Gastrocnemius medialis (tissue), 4 donors: ENCODE measurements at regions of chr1 and their contacts with region 1.

Region 1: DNA sequence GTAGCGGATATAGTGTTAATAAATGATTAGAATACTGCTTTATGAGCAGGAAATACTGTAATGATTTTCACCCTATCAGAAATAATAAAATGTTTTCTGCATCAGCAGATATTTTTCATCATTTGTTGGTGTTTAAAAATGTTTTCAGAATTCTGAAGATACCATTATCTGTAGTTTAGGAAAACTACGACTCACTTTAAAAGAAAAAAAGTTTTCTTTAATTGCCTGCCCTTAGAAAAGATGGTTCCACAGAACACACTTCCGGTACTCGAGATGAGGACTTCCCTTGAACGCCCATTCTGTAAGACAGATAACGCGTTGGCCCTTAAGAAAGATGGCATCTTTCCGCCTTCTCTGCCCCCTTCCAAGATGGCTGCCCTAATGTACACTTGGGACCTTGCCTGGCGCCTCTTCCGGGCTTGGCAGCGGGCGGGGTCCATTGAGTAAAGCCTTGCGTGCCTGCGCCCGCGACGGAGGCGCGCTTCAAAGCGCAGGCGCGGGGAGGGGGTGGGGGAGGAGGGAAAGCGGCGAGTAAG is at the start of gene SZRD1:
- DNase-seq: peak; percentile 94 to 98
- ATAC-seq: peak; percentile 92 to 93
- H3K4me3 ChIP-seq: peak within 1 kb of the TSS; percentile 75 to 84 (median 80)
- H3K27ac ChIP-seq: peak within 1 kb of the TSS; percentile 95 to 96 (median 96)
- H3K4me1 ChIP-seq: peaks cover 24 to 35% of the 10 kb centered on the region in 2 donors
- H3K27me3 ChIP-seq: no peaks in the 10 kb centered on the region
- CTCF ChIP-seq: no peak
- POLR2A ChIP-seq: no peak
- total RNA-seq, gene SZRD1: 44.1 to 102 (median 83.1) TPM

Region 2: GRCh38 chr1:16078925-16079656 is 287.7 kb before region 1 on chr1:
- in situ Hi-C with region 1: loop called (anchors 10 to 25 kb)
- intact Hi-C with region 1: loop called (anchors 2 kb)
- DNase-seq: peak; percentile 39 to 59
- ATAC-seq: peak; percentile 60 to 62
- H3K4me3 ChIP-seq: peak overlapping the region in 1 of 4 donors; percentile 47
- H3K27ac ChIP-seq: no peak overlapping the region
- H3K4me1 ChIP-seq: peaks cover 3 to 12% of the 10 kb centered on the region in 2 donors
- H3K27me3 ChIP-seq: no peaks in the 10 kb centered on the region
- CTCF ChIP-seq: peak; percentile 79 to 89 (median 86)
- POLR2A ChIP-seq: no peak

Region 3: GRCh38 chr1:16146279-16147155 is 220.3 kb before region 1 on chr1:
- in situ Hi-C with region 1: no loop called
- intact Hi-C with region 1: no loop called
- DNase-seq: peak in 1 of 2 donors; percentile 26
- ATAC-seq: peak in 1 of 2 donors; percentile 31
- H3K4me3 ChIP-seq: peak overlapping the region; percentile 26 to 45 (median 38)
- H3K27ac ChIP-seq: peak overlapping the region; percentile 28 to 80 (median 76)
- H3K4me1 ChIP-seq: peaks cover 40 to 42% of the 10 kb centered on the region in 2 donors
- H3K27me3 ChIP-seq: peaks cover 17 to 24% (median 20%) of the 10 kb centered on the region in 3 donors
- CTCF ChIP-seq: no peak
- POLR2A ChIP-seq: peak in 1 of 2 donors; percentile 34

Region 4: DNA sequence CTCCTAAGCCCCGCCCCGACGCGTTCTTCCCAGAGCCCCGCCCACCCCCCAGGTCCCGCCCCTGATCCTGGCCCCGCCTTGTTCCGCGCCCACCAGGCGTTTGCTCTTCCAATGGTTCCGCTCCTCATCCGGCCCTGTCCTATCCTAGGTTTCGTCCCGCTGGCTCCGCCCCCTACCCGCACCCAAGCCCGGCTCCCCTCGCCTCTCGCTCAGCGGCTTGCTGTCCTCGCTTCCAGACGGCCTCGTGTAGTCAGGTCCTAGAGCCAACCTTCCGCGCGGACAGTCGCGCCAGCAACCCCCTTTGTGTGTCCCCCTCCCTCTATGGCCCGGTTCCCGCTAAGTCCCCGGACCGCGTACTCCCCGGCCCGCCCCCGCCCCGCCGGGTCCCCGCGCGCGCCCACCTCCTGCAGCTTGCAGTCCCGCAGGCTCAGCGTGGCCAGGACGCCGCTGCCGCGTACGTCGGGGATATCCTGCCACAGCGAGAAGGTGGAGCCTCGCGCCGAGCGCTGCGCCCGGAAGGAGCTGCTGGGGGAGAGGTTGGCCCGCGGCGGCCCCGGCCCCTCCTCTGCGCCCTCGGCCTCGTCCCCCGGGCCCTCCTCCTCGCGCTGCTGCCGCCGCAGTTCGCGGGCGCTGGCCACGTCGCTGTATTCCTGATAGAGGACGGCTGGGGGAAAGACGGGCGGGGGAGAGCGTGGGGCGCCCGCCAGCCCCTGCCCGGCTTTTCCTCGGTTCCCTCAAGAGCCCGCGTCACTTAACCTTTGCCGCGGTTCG is 160.1 kb before region 1 on chr1:
- in situ Hi-C with region 1: no loop called
- intact Hi-C with region 1: loop called (anchors 5 kb)
- DNase-seq: peak; percentile 90 to 94
- ATAC-seq: peak; percentile 94 to 96
- H3K4me3 ChIP-seq: peak overlapping the region; percentile 48 to 71 (median 64)
- H3K27ac ChIP-seq: peak overlapping the region; percentile 59 to 82 (median 72)
- H3K4me1 ChIP-seq: peaks cover 4 to 6% of the 10 kb centered on the region in 2 donors
- H3K27me3 ChIP-seq: peaks cover 6 to 9% (median 6%) of the 10 kb centered on the region in 3 donors
- CTCF ChIP-seq: peak in 1 of 5 experiments; percentile 1
- POLR2A ChIP-seq: peak; percentile 28 to 43

Region 5: DNA sequence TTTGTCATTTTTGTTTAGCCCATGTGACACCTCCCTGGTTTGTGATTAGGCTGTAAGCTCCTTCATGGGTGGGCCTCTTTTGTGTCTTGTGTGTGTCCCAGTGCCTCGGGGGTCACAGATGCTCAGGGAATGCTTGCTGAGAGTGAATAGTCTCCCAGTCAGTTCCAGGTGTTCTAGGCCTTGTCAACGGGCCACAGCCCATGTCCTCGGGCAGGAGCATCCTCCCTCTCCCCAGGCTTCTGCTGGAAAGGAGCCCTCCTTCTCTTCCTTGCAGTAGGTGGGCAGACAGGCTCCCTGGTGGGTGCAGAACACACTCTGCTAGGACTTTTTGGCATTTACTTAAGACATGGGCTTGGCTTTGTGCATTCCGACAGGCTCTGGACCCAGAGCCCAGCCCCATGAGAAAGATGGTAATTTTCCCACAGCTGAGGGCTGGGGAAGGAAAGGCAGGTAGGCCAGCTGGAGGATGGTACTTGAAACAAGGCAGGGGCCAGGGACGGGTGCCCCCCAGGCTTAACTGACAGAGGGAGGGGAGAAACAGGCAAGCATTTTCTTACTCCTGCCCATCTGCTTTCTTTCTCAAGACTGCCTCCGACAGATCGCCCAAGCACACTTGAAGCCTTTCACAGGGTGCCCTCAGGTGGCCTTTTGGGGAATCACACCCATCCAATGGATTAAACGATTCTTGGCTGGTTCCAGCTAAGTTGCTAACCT is 122.7 kb before region 1 on chr1:
- in situ Hi-C with region 1: loop called in 2 of 4 experiments (anchors 5 to 25 kb)
- intact Hi-C with region 1: no loop called
- DNase-seq: peak; percentile 55 to 79
- ATAC-seq: peak in 1 of 2 donors; percentile 44
- H3K4me3 ChIP-seq: no peak overlapping the region
- H3K27ac ChIP-seq: peak overlapping the region in 1 of 4 donors; percentile 40
- H3K4me1 ChIP-seq: peaks cover 26 to 27% of the 10 kb centered on the region in 2 donors
- H3K27me3 ChIP-seq: no peaks in the 10 kb centered on the region
- CTCF ChIP-seq: peak; percentile 77 to 88 (median 83)
- POLR2A ChIP-seq: no peak